Mammary epithelial cell (primary cell): ENCODE measurements at regions of chr9 and their contacts with region 1.

Region 1: DNA sequence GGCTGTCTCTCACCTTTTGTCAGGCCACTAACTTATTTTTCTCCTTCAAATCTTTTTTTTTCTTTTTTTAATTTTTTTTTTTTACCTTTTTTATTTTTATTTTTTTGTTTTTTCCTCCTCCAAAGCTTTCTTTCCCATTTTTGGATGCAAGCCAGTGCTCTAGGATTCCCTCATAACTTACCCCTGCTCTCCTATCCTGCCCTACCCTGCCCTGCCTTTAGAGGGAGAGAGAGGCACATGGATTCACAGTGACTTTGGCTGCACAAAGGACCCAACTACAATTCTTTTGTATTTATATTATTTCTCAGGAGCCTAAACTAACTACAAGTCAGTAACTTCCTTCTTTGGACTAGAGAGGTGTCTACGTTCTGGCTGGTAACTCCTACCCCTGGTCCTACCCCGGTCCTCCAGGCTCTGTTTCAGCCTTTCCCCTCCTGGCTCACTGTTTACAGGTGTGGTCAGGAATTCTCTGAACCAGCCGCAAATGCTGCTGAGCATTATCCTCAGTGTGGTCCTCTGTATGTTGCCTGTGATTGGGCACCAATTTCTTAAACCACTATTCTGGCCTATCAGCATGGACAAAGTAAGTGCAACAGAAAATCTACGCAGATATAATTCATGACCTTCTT is 8.4 kb upstream of the RUSC2 start:
- DNase-seq: peak; percentile 56
- H3K4me3 ChIP-seq: no peak overlapping the region
- H3K27ac ChIP-seq: no peak overlapping the region
- H3K4me1 ChIP-seq: no peaks in the 10 kb centered on the region
- H3K27me3 ChIP-seq: no peaks in the 10 kb centered on the region
- CTCF ChIP-seq: peak; percentile 95 to 97

Region 2: DNA sequence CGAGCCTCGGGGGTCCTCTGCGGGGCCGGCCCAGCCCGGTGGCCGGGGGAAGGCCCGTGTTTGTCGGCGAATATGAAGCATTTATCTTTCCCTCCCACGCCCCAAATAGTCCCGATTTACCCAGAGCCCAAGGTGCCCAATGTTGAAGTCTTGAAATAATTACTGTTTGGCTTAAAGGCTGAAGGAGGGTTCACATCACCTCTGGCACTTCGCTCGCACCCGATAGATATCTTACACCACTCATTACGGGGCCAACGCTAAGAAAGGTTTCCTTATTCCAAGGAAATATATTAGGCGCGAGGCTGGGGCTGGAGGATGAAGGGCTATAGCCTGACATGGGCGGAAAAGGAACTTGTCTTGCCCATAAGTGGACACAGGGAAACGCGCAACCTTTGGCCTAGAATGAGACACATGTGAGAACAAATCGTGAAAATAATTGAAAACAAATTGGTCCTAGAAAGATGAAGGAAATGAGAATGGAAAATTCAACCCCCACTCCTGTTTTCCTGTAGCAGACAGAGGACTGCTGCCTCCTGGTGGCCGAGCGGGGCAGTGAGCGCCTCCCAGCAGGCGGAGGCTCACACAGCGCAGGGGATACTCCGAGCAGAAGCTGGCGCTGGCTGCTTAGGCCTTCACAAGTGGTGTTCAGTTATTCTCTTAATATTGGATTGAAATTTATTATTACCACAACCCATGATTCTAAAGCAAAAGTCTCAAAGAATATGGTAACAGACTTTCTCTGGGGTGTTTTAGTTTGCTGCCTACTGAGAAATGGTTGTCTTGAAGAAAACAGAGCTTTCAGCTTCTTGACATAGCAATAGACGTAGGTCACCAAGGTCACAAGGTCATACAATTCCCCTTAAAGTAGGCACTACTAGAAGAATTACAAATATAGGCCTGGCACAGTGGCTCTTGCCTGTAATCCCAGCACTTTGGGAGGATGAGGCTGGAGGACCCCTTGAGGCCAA is 779.4 kb before region 1 on chr9:
- CTCF ChIA-PET with region 1: no interaction called
- dilution Hi-C with region 1: no loop called
- in situ Hi-C with region 1: no loop called
- intact Hi-C with region 1: loop called (anchors 1 kb)
- DNase-seq: peak; percentile 61
- H3K4me3 ChIP-seq: peak overlapping the region; percentile 51 to 60 (median 60)
- H3K27ac ChIP-seq: no peak overlapping the region
- H3K4me1 ChIP-seq: peaks cover 5% of the 10 kb centered on the region
- H3K27me3 ChIP-seq: no peaks in the 10 kb centered on the region
- CTCF ChIP-seq: peak; percentile 99

Region 3: GRCh38 chr9:34773346-34773745 is 708.1 kb before region 1 on chr9:
- CTCF ChIA-PET with region 1: no interaction called
- dilution Hi-C with region 1: no loop called
- in situ Hi-C with region 1: no loop called
- intact Hi-C with region 1: no loop called
- DNase-seq: no peak
- H3K4me3 ChIP-seq: no peak overlapping the region
- H3K27ac ChIP-seq: no peak overlapping the region
- H3K4me1 ChIP-seq: no peaks in the 10 kb centered on the region
- H3K27me3 ChIP-seq: peaks cover 3% of the 10 kb centered on the region
- CTCF ChIP-seq: no peak

Region 4: DNA sequence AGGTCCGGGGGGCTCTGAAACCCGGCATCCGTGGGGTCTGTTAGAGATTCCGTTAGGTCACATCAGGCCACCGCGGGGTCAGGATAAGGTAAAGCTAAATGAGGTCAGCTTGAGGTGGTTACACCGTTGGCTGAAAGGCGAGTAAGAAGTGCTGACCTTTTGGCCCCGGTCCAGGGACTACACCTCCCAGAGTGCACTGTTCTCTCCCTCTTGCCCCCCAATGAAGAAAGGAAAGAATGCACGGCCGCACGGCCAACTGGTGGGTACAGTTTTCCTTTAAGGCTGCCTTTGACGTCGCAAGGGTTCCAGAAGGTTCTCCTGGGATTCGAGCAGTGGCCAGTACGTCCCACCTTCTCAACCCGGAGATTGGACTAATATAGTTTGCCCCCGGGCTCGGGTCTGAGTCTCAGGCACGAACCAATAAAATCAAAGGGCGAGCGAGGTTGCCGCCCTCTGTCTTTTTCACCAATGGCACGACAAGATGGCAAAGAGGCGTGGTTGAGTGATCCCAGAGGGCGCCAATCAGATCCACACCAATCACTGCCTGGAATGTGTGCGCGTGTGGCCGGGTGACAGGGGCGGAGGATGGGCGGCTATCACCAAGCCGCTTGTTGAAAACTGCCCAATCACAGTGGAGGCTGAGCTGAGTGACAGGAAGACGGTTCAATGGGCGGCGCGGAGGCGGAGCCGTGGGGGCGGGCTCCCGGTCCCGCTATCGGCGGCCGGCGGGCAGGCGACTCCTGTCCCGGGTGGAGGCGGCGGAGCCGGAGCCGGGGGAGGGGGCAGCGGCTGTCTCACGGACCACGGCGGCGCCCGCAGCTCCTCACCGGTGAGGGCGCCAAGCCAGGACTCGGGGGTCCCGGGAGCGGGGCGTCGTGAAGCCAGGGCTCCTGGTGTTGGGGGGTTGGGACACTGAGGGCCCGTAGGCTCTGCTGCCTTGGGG is 492.2 kb before region 1 on chr9 and contains the start of gene DNAJB5:
- CTCF ChIA-PET with region 1: interaction called, 4 read pairs
- dilution Hi-C with region 1: no loop called
- in situ Hi-C with region 1: no loop called
- intact Hi-C with region 1: loop called (anchors 1 kb)
- DNase-seq: peak; percentile 99
- H3K4me3 ChIP-seq: peak within 1 kb of the TSS; percentile 63 to 88 (median 72)
- H3K27ac ChIP-seq: peak within 1 kb of the TSS; percentile 52
- H3K4me1 ChIP-seq: peaks cover 41% of the 10 kb centered on the region
- H3K27me3 ChIP-seq: no peaks in the 10 kb centered on the region
- CTCF ChIP-seq: no peak
- total RNA-seq, gene DNAJB5: 8.4 to 10.0 TPM

Region 5: DNA sequence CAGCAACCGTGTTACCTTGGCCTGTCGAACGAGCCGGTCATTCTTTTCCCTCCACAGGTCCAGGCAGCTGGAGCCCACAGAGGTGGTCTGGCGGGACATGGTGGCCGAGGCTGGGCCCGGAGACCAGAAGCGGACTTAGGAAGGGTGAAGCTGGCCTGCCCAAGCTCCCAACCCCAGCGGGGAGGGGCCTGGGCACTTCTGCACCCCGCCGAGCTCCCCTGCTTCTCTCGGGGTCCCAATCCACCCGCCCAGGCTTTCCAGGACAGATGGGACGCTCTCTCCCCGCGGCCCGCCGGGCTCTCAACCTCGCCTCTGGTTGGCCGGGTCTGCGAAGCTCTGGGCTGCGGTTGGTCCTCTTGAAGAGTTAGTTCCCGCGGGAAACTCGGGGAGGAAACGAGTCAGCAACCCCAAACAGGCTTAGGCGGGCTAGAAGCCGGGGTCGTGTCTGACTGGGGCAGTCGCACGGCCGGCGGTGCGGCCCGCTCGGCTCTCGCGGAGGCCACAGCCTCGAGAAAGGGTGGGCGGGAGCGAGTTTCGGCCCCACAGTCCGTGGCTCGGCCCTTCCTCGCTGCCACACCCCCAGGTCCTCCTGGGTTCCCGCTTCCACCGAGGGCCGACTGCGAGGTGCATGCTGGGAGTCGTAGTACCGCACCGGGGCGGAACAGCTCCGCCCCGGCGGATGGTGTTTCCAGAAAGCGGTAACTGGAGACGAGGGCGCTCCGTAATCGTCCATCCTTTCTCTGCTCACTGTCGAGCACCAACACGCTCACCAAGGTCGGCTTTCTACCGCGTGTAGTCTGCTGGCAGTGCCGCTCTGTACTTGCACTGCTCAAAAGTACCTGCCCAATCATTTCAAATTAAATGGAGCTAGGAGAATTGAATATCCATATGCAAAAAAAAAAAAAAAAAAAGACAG is 401.8 kb before region 1 on chr9 and contains the start of gene FANCG:
- CTCF ChIA-PET with region 1: interaction called, 15 read pairs
- dilution Hi-C with region 1: no loop called
- in situ Hi-C with region 1: no loop called
- intact Hi-C with region 1: no loop called
- DNase-seq: peak; percentile 93
- H3K4me3 ChIP-seq: peak within 1 kb of the TSS; percentile 82 to 86 (median 82)
- H3K27ac ChIP-seq: peak within 1 kb of the TSS; percentile 76
- H3K4me1 ChIP-seq: peaks cover 18% of the 10 kb centered on the region
- H3K27me3 ChIP-seq: no peaks in the 10 kb centered on the region
- CTCF ChIP-seq: no peak
- total RNA-seq, gene FANCG: 7.0 to 41.7 TPM

Region 6: GRCh38 chr9:35193762-35194161 is 287.7 kb before region 1 on chr9:
- CTCF ChIA-PET with region 1: no interaction called
- dilution Hi-C with region 1: no loop called
- in situ Hi-C with region 1: no loop called
- intact Hi-C with region 1: loop called (anchors 2 kb)
- DNase-seq: no peak
- H3K4me3 ChIP-seq: no peak overlapping the region
- H3K27ac ChIP-seq: no peak overlapping the region
- H3K4me1 ChIP-seq: no peaks in the 10 kb centered on the region
- H3K27me3 ChIP-seq: no peaks in the 10 kb centered on the region
- CTCF ChIP-seq: peak in 1 of 2 donors; percentile 5

Region 7: DNA sequence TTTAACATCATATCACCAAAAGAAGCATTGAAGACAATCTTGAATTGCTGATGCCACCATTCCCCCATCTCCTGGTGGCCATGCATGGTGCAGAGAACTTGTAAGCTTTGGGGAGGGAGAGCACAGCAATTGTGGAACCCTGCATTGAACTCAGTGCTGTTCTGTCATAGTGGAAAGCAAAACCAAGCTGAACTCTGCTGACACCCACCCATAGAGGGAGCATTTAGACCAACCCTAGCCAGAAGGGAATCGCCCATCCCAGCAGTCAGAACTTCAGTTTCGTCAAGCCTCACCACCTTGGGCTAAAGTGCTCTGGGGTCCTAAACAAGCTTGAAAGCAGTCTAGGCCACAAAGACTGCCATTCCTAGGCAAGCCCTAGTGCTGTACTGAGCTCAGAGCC is 29.0 kb before region 1 on chr9:
- CTCF ChIA-PET with region 1: no interaction called
- dilution Hi-C with region 1: no loop called
- in situ Hi-C with region 1: no loop called
- intact Hi-C with region 1: no loop called
- DNase-seq: no peak
- H3K4me3 ChIP-seq: no peak overlapping the region
- H3K27ac ChIP-seq: no peak overlapping the region
- H3K4me1 ChIP-seq: no peaks in the 10 kb centered on the region
- H3K27me3 ChIP-seq: peaks cover 4% of the 10 kb centered on the region
- CTCF ChIP-seq: no peak

Region 8: DNA sequence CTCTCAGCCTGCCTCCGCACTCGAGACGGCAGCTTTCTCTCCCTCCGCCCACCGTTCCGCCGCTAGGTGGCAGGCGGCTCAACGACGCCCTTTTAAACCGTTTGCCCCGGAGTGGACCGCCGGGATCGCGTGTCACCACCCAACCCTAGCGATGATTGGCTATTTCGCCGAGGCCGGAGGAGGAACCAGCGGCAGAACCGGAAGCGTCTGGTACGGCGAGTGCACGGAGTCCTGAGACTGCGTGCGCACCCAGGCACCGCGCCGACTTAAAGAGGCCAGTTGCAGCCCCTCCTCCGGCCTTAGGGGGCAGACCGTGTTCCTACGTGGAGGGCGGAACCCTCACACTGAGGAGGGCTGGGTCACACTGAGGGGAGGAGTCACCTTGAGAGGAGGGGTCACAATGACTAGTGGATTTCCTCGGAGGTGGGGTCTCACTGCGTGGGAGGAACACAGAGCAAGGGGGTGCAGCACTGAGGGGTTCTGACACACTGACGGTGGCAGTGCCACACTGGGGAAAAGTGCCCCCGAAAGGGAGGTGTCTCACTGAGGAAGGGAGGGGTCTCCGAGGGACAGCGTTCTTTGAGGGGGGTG is 122.6 kb after region 1 on chr9:
- CTCF ChIA-PET with region 1: no interaction called
- dilution Hi-C with region 1: no loop called
- in situ Hi-C with region 1: no loop called
- intact Hi-C with region 1: loop called (anchors 5 kb)
- DNase-seq: peak; percentile 99
- H3K4me3 ChIP-seq: peak overlapping the region; percentile 60 to 67 (median 64)
- H3K27ac ChIP-seq: peak overlapping the region; percentile 68
- H3K4me1 ChIP-seq: peaks cover 28% of the 10 kb centered on the region
- H3K27me3 ChIP-seq: no peaks in the 10 kb centered on the region
- CTCF ChIP-seq: peak; percentile 82 to 83

Region 9: DNA sequence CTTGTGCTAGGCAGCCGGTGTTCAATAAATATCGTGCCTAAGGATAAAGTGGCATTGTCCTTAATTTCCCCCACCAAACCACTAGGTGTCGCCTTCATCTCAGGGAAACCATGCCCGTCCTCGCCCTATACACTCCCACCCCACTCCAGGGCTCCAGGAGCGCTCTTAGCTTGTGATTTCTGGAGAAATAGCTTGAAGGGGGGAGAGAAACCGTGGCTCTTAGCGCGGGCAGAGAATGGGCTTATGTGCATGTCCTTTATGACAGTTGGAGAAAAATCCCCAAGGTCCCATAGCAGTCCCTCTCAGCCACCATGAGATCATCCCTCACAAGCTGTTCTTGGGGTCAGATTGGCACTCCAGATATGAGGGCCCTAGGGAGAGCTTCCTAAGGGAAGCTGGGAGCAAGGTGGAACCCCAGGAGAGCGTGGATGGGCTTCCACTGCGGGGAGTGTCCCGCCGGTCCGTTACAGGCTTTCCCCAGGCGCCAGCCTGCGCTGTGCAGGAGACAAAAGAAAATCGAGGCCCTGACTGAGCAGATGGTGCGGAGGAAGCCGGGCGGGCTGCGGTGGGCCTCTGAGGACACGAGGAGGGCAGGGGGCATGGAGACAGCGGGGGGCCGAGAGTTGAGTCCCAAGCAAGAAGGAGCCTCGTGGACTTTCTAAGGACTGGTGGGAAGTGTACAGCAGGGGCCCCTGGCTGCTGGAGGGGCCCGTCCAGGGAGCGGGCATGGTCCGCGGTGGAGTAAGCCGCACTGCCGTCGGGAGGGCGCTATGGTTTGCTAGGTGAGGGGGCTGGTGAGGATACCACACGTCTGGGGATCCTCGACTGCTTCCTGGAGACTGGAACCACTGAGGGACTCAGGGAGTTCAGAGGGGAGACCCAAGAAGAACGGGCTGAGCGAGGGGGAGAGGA is 309.2 kb after region 1 on chr9:
- CTCF ChIA-PET with region 1: no interaction called
- dilution Hi-C with region 1: no loop called
- in situ Hi-C with region 1: no loop called
- intact Hi-C with region 1: loop called (anchors 1 kb)
- DNase-seq: peak; percentile 60
- H3K4me3 ChIP-seq: no peak overlapping the region
- H3K27ac ChIP-seq: no peak overlapping the region
- H3K4me1 ChIP-seq: peaks cover 11% of the 10 kb centered on the region
- H3K27me3 ChIP-seq: no peaks in the 10 kb centered on the region
- CTCF ChIP-seq: peak; percentile 83